Activated CD8-positive, alpha-beta memory T cell treated with anti-CD3 and anti-CD28 coated beads, Interleukin-2, amount 10 ng/mL, durations not matched to agents 7 days and 5 days (primary cell): ENCODE measurements at regions of chr7 and their contacts with region 1.

Region 1: GRCh38 chr7:44606450-44607254 is at the start of gene OGDH:
- DNase-seq: peak; percentile 100
- ATAC-seq: peak; percentile 98
- H3K4me3 Mint-ChIP-seq: peak within 1 kb of the TSS; percentile 99
- H3K27ac Mint-ChIP-seq: peak within 1 kb of the TSS; percentile 99
- H3K4me1 Mint-ChIP-seq: peaks cover 51% of the 10 kb centered on the region
- H3K27me3 Mint-ChIP-seq: peaks cover 5% of the 10 kb centered on the region
- total RNA-seq, gene OGDH: 134 to 136 TPM

Region 2: GRCh38 chr7:44633254-44634186 is 26.9 kb after region 1 on chr7:
- CTCF ChIA-PET with region 1: interaction called, 18 read pairs
- DNase-seq: peak; percentile 68
- ATAC-seq: peak; percentile 20
- H3K4me3 Mint-ChIP-seq: no peak overlapping the region
- H3K27ac Mint-ChIP-seq: peak overlapping the region; percentile 99
- H3K4me1 Mint-ChIP-seq: peaks cover 91% of the 10 kb centered on the region
- H3K27me3 Mint-ChIP-seq: no peaks in the 10 kb centered on the region

Region 3: GRCh38 chr7:44638611-44639557 is 32.2 kb after region 1 on chr7:
- CTCF ChIA-PET with region 1: interaction called, 18 read pairs
- DNase-seq: peak; percentile 96
- ATAC-seq: peak; percentile 80
- H3K4me3 Mint-ChIP-seq: peak overlapping the region; percentile 72
- H3K27ac Mint-ChIP-seq: peak overlapping the region; percentile 99
- H3K4me1 Mint-ChIP-seq: peaks cover 80% of the 10 kb centered on the region
- H3K27me3 Mint-ChIP-seq: no peaks in the 10 kb centered on the region